Endothelial cell of umbilical vein (primary cell): ENCODE measurements at regions of chr17 and their contacts with region 1.

Region 1: DNA sequence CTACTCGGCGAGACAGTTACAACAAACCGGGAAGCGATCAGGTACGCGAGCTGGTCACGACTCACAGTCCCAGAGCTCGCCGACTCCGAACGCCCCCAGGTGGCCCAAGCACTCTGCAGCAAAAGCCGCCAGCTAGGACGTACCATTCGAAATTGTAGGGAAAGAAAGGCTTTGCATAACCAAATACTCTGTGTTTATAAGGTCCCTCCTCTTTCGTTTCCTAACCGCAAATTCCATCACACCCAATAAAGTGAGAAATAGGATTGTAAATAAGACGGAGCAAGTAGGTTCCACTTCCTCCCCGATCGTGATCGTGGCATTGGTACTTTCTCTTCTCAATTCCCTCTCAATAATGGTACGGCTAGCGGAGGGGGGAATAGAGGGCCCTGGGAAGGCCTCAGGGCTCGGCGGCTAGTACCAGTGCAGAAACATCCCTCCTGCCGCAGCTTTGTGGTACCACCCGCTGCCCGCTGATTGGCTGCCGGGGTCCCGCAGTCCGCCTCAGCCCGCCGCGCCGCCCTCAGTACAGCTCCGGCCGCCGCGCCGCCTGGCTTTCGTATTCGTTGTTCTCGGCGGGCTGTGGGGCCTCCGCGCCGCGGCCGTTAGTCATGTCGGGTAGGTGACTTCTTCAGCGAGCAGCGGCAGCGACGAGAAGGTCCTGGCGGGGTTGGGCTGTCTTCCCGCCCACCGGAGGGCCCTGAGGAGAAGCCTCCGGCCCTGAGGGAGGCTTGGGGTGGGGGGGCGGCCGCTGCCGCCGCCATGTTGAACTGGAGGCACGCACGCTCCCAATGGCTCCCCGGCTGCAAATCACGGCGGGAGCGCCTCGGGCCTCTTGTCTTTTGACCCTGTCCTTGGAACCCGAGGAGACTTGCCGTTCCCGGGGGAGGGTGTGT is at the start of gene TAF15:
- DNase-seq: peak; percentile 98
- H3K4me3 ChIP-seq: peak within 1 kb of the TSS; percentile 56 to 96 (median 81)
- H3K27ac ChIP-seq: peak within 1 kb of the TSS; percentile 90
- H3K4me1 ChIP-seq: peaks cover 35% of the 10 kb centered on the region
- H3K27me3 ChIP-seq: no peaks in the 10 kb centered on the region
- CTCF ChIP-seq: peak; percentile 77 to 85
- POLR2A ChIP-seq: peak; percentile 98
- total RNA-seq, gene TAF15: 244 and 247 TPM in 2 replicates

Region 2: DNA sequence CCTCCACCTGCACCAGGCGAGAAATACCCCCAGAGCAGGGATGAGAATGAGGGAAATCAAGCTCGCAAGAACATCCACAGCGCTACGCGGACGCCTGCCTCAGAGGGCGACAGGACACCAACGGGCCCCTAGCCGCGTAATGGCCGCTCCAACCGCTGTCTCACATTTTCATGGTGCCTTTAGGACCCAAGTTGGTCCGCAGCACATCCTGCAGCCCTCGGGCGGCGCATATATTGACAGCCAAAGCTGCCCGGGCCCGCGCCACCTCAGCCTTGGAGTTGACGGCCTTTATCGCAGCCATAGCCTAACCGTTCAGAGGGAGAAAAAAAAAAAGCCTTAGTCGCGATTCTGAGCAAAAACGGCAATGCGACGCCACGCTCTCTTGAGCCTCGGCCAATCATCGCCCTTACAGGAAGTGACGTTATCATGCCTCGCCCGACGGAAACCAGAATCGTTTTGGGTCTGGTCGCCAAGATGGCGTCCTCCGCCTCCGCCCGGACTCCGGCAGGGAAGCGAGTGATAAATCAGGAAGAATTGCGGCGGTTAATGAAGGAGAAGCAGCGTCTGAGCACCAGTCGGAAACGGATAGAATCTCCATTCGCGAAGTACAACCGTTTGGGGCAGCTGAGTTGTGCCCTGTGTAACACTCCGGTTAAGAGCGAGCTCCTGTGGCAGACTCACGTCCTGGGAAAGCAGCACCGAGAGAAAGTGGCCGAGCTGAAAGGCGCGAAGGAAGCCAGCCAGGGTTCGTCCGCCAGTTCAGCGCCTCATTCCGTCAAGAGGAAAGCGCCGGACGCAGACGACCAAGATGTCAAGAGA is 847.9 kb before region 1 on chr17 and contains the starts of genes CCT6B and ZNF830:
- CTCF ChIA-PET with region 1: no interaction called
- POLR2A ChIA-PET with region 1: no interaction called
- dilution Hi-C with region 1: no loop called
- intact Hi-C with region 1: loop called (anchors 1 kb)
- DNase-seq: peak; percentile 96
- H3K4me3 ChIP-seq: peak within 1 kb of the TSS; percentile 29 to 84 (median 80)
- H3K27ac ChIP-seq: peak within 1 kb of the TSS; percentile 76
- H3K4me1 ChIP-seq: peaks cover 18% of the 10 kb centered on the region
- H3K27me3 ChIP-seq: peaks cover under 1 to 1% of the 10 kb centered on the region in 2 experiments
- CTCF ChIP-seq: no peak
- POLR2A ChIP-seq: peak; percentile 74
- total RNA-seq, gene CCT6B: 0.78 and 1.6 TPM in 2 replicates
- total RNA-seq, gene ZNF830: 13.9 and 15.0 TPM in 2 replicates

Region 3: DNA sequence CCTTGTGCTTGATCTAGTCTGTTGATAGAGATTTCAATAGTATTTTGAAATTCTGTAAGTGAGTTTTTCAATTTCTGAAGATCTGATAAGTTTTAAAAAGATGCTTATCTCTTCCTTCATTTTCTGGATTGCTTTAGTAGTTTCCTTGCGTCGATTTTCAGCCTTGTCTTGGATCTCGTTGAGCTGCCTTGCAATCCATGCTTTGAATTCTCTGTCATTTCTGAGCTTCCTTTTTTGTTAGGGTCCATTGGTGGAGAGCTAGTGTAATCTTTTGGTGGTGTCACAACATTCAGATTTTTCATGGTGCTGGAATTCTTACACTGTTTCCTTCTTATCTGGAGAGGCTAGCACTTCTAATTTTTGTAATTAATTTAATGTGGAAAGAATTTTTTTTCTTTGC is 496.9 kb before region 1 on chr17:
- CTCF ChIA-PET with region 1: no interaction called
- POLR2A ChIA-PET with region 1: no interaction called
- dilution Hi-C with region 1: no loop called
- intact Hi-C with region 1: no loop called
- DNase-seq: no peak
- H3K4me3 ChIP-seq: no peak overlapping the region
- H3K27ac ChIP-seq: no peak overlapping the region
- H3K4me1 ChIP-seq: peaks cover 3% of the 10 kb centered on the region
- H3K27me3 ChIP-seq: no peaks in the 10 kb centered on the region
- CTCF ChIP-seq: no peak
- POLR2A ChIP-seq: no peak